ENCODE measurements at regions of chr9 and their contacts with region 1.

Region 1: GRCh38 chr9:109012876-109013678 is at the start of gene CTNNAL1:
- DNase-seq: peak; percentile 64
- ATAC-seq: peak; percentile 88
- H3K4me3 ChIP-seq: peak within 1 kb of the TSS; percentile 68 to 84
- H3K27ac ChIP-seq: peak within 1 kb of the TSS; percentile 91
- H3K4me1 ChIP-seq: peaks cover 35 to 48% of the 10 kb centered on the region in 2 experiments
- H3K27me3 ChIP-seq: no peaks in the 10 kb centered on the region
- CTCF ChIP-seq: no peak
- POLR2A ChIP-seq: peak; percentile 80
- RAD21 ChIP-seq: no peak
- total RNA-seq, gene CTNNAL1: 87.2 TPM

Region 2: DNA sequence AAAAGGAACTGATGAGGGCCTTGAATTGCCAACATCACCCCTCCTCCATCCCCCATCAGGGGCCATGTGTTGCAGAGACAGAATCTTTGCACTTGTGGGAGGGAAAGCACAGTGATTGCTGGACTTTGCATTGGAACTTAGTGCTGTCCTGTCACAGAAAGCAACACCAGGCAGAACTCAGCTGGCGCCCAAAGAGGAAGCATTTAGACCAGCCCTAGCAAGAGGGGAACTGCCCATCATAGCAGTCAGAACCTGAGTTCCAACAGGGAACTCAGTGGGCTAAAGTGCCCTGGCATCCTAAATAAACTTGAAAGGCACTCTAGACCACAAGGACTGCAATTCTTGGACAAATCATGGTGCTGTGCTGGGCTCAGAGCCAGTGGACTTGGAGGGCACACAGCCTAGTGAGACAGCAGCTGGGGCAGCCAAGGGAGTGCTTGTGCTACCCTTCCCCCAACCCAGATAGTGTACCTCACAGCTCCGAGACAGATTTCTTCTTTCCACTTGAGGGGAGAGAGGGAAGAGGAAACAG is 285.4 kb before region 1 on chr9:
- CTCF ChIA-PET with region 1: no interaction called
- POLR2A ChIA-PET with region 1: no interaction called
- RAD21 ChIA-PET with region 1: no interaction called
- intact Hi-C with region 1: no loop called
- DNase-seq: no peak
- ATAC-seq: no peak
- H3K4me3 ChIP-seq: no peak overlapping the region
- H3K27ac ChIP-seq: no peak overlapping the region
- H3K4me1 ChIP-seq: no peaks in the 10 kb centered on the region
- H3K27me3 ChIP-seq: no peaks in the 10 kb centered on the region
- CTCF ChIP-seq: no peak
- POLR2A ChIP-seq: no peak
- RAD21 ChIP-seq: no peak

Region 3: DNA sequence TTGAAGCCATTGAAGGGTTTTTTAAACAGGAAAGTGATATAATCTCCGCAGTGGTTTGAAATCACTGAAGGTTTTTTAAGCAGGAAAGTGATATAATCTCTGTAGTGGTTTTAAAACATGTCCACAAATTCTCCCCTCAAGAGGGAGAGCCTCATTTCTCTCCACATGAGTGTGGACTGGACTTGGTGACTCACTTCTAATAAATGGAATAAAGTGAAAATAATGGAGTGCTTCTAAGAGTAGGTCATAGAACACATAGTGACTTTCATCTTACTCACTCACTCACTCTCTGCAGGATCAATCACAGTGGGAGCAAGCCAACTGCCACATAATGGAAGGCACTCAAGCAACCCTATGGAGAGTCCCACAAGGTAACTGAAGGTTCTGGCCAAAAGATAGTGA is 11.8 kb before region 1 on chr9:
- CTCF ChIA-PET with region 1: no interaction called
- POLR2A ChIA-PET with region 1: no interaction called
- RAD21 ChIA-PET with region 1: no interaction called
- intact Hi-C with region 1: no loop called
- DNase-seq: peak; percentile 83
- ATAC-seq: peak; percentile 94
- H3K4me3 ChIP-seq: peak overlapping the region in 1 of 2 experiments; percentile 27; a peak in 2 of 4 replicates
- H3K27ac ChIP-seq: peak overlapping the region; percentile 73
- H3K4me1 ChIP-seq: peaks cover 25 to 41% of the 10 kb centered on the region in 2 experiments
- H3K27me3 ChIP-seq: no peaks in the 10 kb centered on the region
- CTCF ChIP-seq: no peak
- POLR2A ChIP-seq: no peak
- RAD21 ChIP-seq: 0 out of 2 replicates have a peak, but pooled peaks have one; percentile 17

Region 4: GRCh38 chr9:109107402-109108240 is 94.5 kb after region 1 on chr9:
- CTCF ChIA-PET with region 1: no interaction called
- POLR2A ChIA-PET with region 1: no interaction called
- RAD21 ChIA-PET with region 1: no interaction called
- intact Hi-C with region 1: loop called (anchors 5 kb)
- DNase-seq: peak; percentile 48
- ATAC-seq: peak; percentile 81
- H3K4me3 ChIP-seq: no peak overlapping the region
- H3K27ac ChIP-seq: peak overlapping the region; percentile 37; the same call in 1 of the 2 replicates
- H3K4me1 ChIP-seq: peaks cover 48 to 66% of the 10 kb centered on the region in 2 experiments
- H3K27me3 ChIP-seq: no peaks in the 10 kb centered on the region
- CTCF ChIP-seq: no peak
- POLR2A ChIP-seq: no peak
- RAD21 ChIP-seq: no peak